ENCODE measurements at regions of chr14 and their contacts with region 1.

Region 1: DNA sequence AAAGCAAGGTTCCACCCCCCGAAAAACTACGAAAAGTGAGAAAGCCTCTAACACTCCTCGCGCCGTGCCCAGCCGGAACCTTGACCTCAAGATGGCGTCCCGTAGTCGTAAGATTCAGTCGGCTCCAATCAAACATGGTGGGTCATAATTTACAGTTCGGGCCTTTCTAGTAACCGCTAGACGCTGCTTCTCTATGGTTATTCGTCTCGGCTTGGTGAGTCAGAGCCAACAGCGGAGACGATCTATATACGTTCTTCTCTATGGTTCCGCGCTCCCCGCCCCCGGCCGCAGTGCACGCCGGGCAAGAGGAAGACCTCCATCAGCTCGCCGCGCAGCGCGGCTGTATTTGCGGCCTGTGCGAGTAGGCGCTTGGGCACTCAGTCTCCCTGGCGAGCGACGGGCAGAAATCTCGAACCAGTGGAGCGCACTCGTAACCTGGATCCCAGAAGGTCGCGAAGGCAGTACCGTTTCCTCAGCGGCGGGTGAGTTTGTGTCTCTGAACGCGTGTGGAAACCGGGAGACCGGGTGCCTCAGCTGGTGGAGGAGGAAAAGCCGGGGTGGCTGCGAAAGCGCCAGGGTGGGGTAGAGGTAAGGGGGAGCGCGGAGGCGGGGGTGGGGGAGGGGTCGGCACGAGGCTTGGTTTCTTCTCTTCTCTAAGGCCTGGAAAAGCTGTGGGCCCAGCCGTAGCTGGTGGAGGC is at the start of gene RBM25:
- DNase-seq: peak; percentile 89 to 97 (median 96)
- H3K4me3 ChIP-seq: peak within 1 kb of the TSS; percentile 90
- H3K4me3 Mint-ChIP-seq: peak within 1 kb of the TSS in 1 of 7 donors; percentile 1
- H3K27ac ChIP-seq: peak within 1 kb of the TSS; percentile 89
- H3K27ac Mint-ChIP-seq: no peak within 1 kb of the TSS
- H3K4me1 ChIP-seq: peaks cover 38% of the 10 kb centered on the region
- H3K4me1 Mint-ChIP-seq: peaks cover 34 to 51% (median 41%) of the 10 kb centered on the region in 3 donors
- H3K27me3 ChIP-seq: no peaks in the 10 kb centered on the region
- H3K27me3 Mint-ChIP-seq: no peaks in the 10 kb centered on the region
- total RNA-seq, gene RBM25: 96.5 to 99.2 TPM

Region 2: DNA sequence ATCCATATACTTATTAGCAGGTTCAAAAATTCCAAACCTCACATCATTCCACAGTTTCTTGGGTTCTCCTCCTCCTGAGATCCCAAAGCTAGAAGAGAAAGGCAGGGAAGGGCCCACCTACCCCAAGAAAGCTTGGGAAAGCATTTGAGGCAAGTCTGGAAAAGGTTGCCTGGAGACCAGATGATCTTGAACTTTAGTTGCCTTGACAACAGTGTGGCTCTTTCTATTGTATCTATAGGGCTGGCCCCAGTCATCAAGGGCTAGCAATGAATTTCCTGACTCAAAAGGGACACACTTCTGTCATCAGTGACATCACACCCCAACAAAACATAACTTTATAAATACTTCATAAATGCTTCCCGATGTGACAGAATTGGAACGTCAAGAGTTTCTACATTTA is 71.5 kb before region 1 on chr14:
- CTCF ChIA-PET with region 1: no interaction called
- POLR2A ChIA-PET with region 1: no interaction called
- DNase-seq: no peak
- H3K4me3 ChIP-seq: no peak overlapping the region
- H3K4me3 Mint-ChIP-seq: no peak overlapping the region
- H3K27ac ChIP-seq: no peak overlapping the region
- H3K27ac Mint-ChIP-seq: no peak overlapping the region
- H3K4me1 ChIP-seq: no peaks in the 10 kb centered on the region
- H3K4me1 Mint-ChIP-seq: peaks cover 2 to 5% (median 3%) of the 10 kb centered on the region in 3 donors
- H3K27me3 ChIP-seq: no peaks in the 10 kb centered on the region
- H3K27me3 Mint-ChIP-seq: peaks cover 0 to 2% of the 10 kb centered on the region in 2 donors

Region 3: DNA sequence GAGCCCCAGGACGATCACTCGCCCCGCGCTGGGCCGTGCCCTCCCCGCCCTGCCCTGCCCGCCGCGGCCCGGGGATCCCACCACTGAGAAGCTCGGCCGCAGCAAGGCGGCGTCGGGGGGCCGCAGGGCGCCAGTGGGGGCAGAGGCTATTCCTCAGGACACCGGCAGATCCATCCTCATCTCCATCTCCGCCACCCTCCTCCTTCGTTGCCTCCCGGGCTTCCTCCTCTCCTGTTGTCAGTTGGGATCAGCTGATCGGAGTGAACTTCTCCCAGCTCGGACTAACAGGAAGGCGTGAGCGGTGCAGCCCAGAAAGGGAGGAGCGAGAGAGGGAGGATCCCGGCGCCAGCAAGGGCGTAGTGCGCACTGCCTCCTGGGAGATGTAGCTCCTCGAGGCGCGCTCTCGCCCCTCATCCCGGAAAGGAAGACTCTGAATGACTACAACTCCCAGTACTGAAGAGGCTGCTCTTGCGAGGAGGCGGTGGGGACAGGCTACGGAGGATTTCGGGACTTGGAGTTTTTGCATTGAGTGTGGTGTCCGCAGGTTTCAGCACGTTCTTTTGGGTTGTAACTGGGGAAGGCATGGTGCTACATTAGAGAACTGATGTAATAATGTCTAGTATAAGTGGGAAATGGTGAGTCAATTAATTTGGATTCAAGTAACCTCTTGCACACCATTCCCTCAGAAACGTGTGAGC is 31.4 kb before region 1 on chr14 and contains the start of gene ZFYVE1:
- CTCF ChIA-PET with region 1: interaction called, 6 read pairs
- POLR2A ChIA-PET with region 1: interaction called, 40 read pairs
- DNase-seq: peak; percentile 84 to 90 (median 86)
- H3K4me3 ChIP-seq: peak within 1 kb of the TSS; percentile 94
- H3K4me3 Mint-ChIP-seq: peak within 1 kb of the TSS; percentile 80 to 99 (median 98)
- H3K27ac ChIP-seq: peak within 1 kb of the TSS; percentile 48
- H3K27ac Mint-ChIP-seq: peak within 1 kb of the TSS; percentile 29 to 96 (median 92)
- H3K4me1 ChIP-seq: peaks cover 23% of the 10 kb centered on the region
- H3K4me1 Mint-ChIP-seq: peaks cover 41 to 47% (median 45%) of the 10 kb centered on the region in 3 donors
- H3K27me3 ChIP-seq: no peaks in the 10 kb centered on the region
- H3K27me3 Mint-ChIP-seq: no peaks in the 10 kb centered on the region
- total RNA-seq, gene ZFYVE1: 11.7 to 11.8 TPM

Region 4: GRCh38 chr14:73136387-73137225 is 78.2 kb after region 1 on chr14 and contains the start of gene PSEN1:
- CTCF ChIA-PET with region 1: no interaction called
- POLR2A ChIA-PET with region 1: interaction called, 28 read pairs
- DNase-seq: peak; percentile 98 to 99 (median 99)
- H3K4me3 ChIP-seq: peak within 1 kb of the TSS; percentile 78
- H3K4me3 Mint-ChIP-seq: peak within 1 kb of the TSS; percentile 91 to 97 (median 95)
- H3K27ac ChIP-seq: peak within 1 kb of the TSS; percentile 94
- H3K27ac Mint-ChIP-seq: peak within 1 kb of the TSS; percentile 92 to 99 (median 98)
- H3K4me1 ChIP-seq: peaks cover 10% of the 10 kb centered on the region
- H3K4me1 Mint-ChIP-seq: peaks cover 31 to 40% (median 37%) of the 10 kb centered on the region in 3 donors
- H3K27me3 ChIP-seq: no peaks in the 10 kb centered on the region
- H3K27me3 Mint-ChIP-seq: peaks cover 0 to 2% of the 10 kb centered on the region in 2 donors
- total RNA-seq, gene PSEN1: 31.7 to 34.2 TPM